Activated T-helper 1 cell treated with anti-CD3 and anti-CD28 coated beads, Interleukin-12 subunit alpha, Interleukin-12 subunit beta, Interleukin-2, Interleukin-4 antibody, amounts not matched to agents 30 ng/mL and 10 ng/mL and 1 ng/mL, durations not matched to agents 14 hours and 24 hours and 36 hours (primary cell): ENCODE measurements at regions of chr6 and their contacts with region 1.

Region 1: GRCh38 chr6:24855395-24856245 is 56.9 kb upstream of the ARMH2 start:
- DNase-seq: peak; percentile 58
- H3K4me3 Mint-ChIP-seq: no peak overlapping the region
- H3K27ac Mint-ChIP-seq: peak overlapping the region; percentile 88
- H3K4me1 Mint-ChIP-seq: peaks cover 52% of the 10 kb centered on the region
- H3K27me3 Mint-ChIP-seq: no peaks in the 10 kb centered on the region

Region 2: GRCh38 chr6:24720604-24721460 is 134.8 kb before region 1 on chr6:
- intact Hi-C with region 1: loop called (anchors 2 kb)
- DNase-seq: peak; percentile 100
- H3K4me3 Mint-ChIP-seq: peak overlapping the region; percentile 100
- H3K27ac Mint-ChIP-seq: peak overlapping the region; percentile 96
- H3K4me1 Mint-ChIP-seq: peaks cover 47% of the 10 kb centered on the region
- H3K27me3 Mint-ChIP-seq: no peaks in the 10 kb centered on the region

Region 3: DNA sequence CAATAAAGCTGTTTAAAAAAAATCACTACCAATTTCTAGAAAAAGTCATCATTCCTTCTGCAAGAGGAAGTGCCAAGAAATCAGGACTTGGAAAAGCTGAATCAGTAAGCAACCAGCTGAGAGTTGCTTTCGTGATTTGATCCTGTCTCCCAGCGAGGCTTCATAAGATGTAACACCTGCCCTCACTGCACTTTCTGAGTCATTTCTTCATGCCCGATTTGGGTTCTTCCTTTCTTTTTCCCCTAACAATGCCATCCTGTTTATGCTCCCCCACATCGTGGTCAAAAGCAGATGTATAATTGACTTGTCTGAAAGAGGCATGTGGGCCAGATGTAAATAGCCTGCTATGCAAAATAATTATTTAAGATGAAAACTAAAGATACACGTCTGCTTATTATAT is 28.0 kb after region 1 on chr6:
- intact Hi-C with region 1: loop called (anchors 1 kb)
- DNase-seq: no peak
- H3K4me3 Mint-ChIP-seq: peak overlapping the region; percentile 66
- H3K27ac Mint-ChIP-seq: peak overlapping the region; percentile 91
- H3K4me1 Mint-ChIP-seq: peaks cover 79% of the 10 kb centered on the region
- H3K27me3 Mint-ChIP-seq: no peaks in the 10 kb centered on the region

Region 4: GRCh38 chr6:24910961-24911712 is 55.5 kb after region 1 on chr6:
- intact Hi-C with region 1: loop called (anchors 1 kb)
- DNase-seq: peak; percentile 29
- H3K4me3 Mint-ChIP-seq: peak overlapping the region; percentile 89
- H3K27ac Mint-ChIP-seq: peak overlapping the region; percentile 94
- H3K4me1 Mint-ChIP-seq: peaks cover 91% of the 10 kb centered on the region
- H3K27me3 Mint-ChIP-seq: no peaks in the 10 kb centered on the region

Region 5: DNA sequence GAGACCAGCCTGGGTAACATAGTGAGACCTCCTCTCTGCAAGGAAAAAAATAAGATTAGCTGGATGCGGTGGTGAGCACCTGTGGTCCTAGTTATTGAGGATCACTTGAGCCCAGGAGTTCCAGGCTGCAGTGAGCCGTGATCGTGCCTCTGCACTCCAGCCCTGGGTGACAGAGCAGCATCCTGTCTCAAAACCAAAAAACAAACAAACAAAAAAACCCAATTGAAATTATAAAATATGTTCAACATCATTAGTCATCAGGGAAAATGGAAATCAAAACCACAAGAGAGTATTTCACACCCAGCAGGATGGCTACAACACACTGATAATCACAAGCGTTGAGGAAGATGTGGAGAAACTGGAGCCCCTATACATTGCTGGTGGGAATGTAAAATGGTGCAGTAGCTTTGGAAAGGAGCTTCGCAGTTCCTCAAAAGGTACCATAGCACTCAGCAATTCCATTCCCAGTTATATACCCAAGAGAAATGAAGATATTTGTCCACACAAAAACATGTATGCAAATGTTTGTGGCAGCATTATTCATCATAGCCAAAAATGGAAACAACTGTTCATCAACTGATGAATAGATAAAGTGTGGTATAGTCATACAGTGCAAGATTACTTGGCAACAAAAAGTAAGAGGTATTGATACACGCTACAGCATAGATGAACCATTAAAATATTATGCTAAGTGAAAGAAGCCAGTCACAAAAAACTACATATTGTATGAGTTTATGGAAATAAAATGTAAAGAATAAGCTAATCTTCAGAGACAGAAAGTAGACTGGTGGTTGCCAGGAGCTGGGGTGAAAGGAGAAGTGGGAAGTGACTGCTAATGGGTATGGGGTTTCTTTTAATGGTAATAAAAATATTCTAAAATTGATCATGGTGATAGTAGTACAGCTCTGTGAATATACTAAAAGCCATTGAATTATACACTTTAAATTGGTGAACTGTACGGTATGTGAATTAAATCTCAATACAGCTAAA is 118.9 kb after region 1 on chr6:
- intact Hi-C with region 1: loop called (anchors 1 kb)
- DNase-seq: no peak
- H3K4me3 Mint-ChIP-seq: peak overlapping the region; percentile 34
- H3K27ac Mint-ChIP-seq: peak overlapping the region; percentile 86
- H3K4me1 Mint-ChIP-seq: peaks cover 52% of the 10 kb centered on the region
- H3K27me3 Mint-ChIP-seq: no peaks in the 10 kb centered on the region

Region 6: DNA sequence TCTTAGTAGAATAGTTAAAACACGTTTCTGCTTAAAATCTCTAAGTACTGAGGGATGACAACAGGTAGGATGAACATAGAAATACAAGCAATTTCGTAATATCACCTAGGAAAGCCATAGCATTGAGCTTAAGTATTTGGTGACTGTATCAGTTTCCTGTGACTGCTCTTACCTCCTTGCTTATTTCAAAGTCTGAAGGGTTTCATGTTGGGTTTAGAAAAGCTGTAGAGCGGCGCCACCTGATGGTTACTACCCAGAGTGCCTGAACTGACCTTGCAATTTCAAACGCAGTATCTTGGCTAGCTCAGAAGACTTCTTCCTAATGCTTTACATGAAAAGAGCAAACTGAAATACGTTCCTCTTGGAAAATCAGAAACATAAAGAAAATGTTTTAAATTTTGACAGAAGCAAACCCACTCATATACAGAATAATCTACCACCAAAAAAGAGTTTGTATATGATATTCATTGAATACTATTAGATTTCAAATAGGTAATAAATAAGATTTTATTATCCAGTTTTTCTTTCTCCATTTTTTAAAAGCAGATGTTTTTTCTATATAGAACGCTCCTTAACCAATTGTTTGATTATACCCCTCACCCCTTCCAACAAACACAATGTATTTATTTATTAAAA is 162.4 kb after region 1 on chr6:
- intact Hi-C with region 1: loop called (anchors 1 kb)
- DNase-seq: peak; percentile 70
- H3K4me3 Mint-ChIP-seq: no peak overlapping the region
- H3K27ac Mint-ChIP-seq: no peak overlapping the region
- H3K4me1 Mint-ChIP-seq: peaks cover 50% of the 10 kb centered on the region
- H3K27me3 Mint-ChIP-seq: no peaks in the 10 kb centered on the region